GM10248 (cell line): ENCODE measurements at regions of chr4 and their contacts with region 1.

Region 1: DNA sequence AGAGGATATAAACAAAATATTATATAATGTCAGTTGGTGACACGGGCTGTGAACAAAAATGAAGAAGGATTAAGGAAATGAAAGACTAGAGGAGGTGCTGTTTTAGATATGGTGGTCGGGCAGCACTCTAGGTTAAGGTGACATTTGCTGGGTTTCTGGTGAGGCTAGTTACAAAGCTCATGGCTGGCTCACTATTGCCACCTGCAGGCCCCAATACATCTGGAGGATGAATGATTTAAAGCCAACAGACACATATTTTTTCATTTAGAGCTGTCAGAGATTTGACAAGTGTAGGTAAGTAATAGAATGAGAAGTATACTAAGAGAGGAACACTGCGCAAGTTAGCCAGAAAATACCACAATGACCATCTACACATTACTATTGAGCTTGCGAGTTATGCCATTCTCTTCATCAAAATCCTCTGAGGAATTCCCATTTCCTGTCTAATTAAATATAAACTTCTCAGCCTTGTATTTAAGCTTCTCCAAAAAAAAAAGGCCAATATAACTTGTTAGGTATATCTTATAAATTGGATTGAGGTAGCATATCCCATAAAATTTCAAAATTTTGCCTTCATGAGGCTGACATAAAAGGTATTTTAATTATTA is 6.4 kb upstream of the FGG start:
- DNase-seq: peak; percentile 46
- CTCF ChIP-seq: peak; percentile 70

Region 2: DNA sequence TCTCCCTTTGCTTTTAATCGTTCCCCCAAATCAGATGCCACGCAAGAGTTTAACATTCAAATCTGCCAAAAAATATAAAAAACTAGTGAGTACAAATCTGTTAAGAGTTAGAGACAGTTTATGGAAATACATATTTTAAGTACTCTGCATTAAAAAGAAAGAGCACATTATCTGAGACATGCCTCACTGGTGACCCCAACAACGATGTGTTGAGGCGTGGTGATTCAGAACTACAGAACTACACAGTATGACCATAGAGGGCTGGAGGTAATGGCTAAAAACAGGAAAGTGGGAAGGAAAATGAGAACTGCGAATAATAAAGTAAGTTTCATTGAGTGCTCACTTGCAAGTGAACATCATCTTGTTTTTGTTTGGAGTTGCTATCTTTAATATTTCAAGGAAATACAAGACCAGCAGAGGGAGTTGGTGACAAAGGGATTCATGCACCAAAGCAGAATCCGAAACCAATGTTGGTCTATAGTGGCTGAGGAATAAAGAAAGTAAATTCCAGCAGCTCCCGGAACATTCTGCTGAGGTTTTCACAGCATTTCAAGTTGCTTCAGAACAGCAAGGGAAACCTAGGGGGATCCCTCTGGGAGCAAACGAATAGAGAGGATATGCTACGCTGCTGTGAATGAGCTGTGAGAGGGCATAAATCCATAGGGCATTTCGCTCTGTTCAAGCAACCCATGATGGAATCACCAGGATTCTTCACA is 219.4 kb before region 1 on chr4:
- CTCF ChIA-PET with region 1: no interaction called
- POLR2A ChIA-PET with region 1: no interaction called
- DNase-seq: no peak
- CTCF ChIP-seq: no peak

Region 3: GRCh38 chr4:154559494-154560418 is 59.1 kb before region 1 on chr4:
- CTCF ChIA-PET with region 1: interaction called, 550 read pairs
- POLR2A ChIA-PET with region 1: no interaction called
- DNase-seq: peak; percentile 34
- CTCF ChIP-seq: peak; percentile 61

Region 4: GRCh38 chr4:154574311-154574710 is 44.5 kb before region 1 on chr4:
- CTCF ChIA-PET with region 1: interaction called, 15 read pairs
- POLR2A ChIA-PET with region 1: no interaction called
- DNase-seq: no peak
- CTCF ChIP-seq: no peak

Region 5: DNA sequence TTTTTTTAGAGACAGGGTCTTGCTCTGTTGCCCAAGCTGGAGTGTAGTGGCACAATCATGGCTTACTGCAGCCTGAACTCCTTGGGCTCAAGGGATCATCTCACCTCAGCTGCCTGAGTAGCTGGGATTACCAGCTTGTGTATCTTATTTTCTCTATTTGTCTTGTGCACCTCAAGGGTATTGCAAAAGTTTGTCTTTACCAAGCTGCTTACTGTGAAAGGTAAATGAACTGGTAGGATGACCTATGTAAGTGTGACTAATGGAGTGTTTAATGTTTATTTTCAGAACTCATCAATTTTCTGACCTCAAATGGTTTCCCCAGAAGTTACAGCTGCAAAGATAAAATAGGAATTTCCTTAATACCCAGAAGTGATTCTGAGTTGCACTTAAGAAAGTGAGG is 23.0 kb before region 1 on chr4:
- CTCF ChIA-PET with region 1: interaction called, 19 read pairs
- POLR2A ChIA-PET with region 1: no interaction called
- DNase-seq: no peak
- CTCF ChIP-seq: no peak

Region 6: DNA sequence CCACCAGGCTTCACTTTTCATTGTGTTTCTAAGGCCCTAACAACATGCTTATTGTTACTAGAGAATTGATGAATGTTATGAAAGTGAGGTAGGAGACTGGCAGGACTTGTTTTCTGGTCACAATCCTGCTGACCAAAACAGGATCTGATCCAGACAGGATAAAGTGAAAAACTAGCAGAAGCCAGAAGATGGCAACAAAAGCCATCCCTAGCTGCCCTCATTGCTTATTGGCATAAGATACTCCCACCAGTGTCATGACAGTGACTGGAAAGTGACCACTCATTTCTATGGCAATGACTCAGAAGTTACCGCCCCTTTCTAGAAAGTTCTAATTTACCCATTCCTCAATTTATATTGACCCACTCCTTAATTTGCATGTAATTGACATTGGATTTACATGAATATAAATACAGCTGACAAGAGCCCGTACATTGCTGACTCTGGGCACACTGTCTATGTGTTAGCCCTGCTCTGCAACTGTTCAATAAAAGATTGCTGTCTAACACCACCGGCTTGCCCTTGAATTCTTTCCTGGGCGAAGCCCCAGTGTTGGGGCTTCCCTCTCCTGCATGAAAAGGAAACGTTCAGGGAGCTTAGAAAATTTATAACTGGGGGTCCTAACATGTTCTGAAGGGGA is 23.7 kb after region 1 on chr4:
- CTCF ChIA-PET with region 1: interaction called, 14 read pairs
- POLR2A ChIA-PET with region 1: no interaction called
- DNase-seq: no peak
- CTCF ChIP-seq: no peak